GM13976 (cell line): ENCODE measurements at regions of chr9 and their contacts with region 1.

Region 1: GRCh38 chr9:129783516-129784361 is 19.2 kb upstream of the TOR1B start:
- DNase-seq: peak; percentile 88
- CTCF ChIP-seq: peak; percentile 87

Region 2: DNA sequence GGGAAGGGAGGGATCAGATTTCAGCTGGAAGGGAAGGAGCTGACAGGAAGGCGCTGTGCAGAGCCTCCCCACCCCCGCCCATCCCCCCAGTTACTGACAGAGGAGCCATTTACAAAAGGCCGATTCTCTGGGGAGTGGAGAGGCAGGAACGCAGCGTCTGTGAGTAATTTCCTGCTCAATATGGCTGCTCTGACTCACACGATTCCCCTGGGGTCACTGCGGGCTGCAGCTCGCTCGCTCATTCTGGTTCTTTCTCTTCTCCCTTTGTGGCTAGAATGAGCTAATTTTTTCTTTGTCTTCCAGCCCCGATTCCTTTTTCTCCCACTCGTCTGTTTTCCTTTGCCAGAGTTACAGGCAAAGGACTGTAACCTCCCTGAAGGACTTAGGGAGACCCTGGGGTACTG is 643.7 kb before region 1 on chr9:
- in situ Hi-C with region 1: loop called (anchors 25 kb)
- DNase-seq: peak; percentile 93
- CTCF ChIP-seq: no peak

Region 3: DNA sequence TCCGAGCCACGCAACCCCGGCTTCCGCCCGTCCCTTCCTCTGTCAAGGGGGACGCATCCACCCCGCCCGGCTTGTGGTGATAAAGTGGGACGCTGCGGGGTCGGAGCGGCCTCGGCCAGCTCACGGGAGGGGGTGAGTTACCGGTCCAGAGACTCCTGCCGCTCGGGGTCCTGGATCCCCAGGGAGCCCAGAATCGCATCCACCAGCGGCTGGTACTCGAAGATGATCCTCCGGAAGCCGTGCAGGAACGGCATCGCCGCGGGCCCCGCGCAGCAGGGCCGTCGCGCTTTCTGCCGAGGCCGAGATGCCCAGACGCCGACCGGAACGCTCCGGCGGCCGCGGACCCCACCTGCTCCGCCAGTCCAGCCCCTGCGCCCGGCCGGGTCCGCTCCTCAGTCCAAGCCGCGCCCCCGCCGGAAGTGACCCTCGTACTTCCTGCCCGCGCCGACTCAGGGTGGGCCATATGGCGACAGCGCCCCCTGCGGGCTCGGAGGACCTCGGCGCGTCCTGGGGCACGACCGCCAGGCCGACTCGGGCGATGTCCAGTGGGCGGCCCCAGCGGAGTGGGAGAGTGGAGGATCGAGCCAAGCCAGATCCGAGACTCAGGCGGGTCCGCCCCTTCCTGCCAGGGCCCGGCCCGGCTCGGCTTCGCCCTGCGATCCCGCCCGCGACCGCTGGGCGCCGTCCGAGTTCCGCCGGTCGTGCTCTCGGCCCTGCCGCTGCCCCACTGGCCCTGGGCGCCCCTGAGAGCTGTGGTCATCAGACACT is 141.8 kb before region 1 on chr9 and contains the start of gene ASB6:
- in situ Hi-C with region 1: loop called (anchors 10 kb)
- DNase-seq: peak; percentile 100
- CTCF ChIP-seq: peak; percentile 94

Region 4: GRCh38 chr9:129737479-129738274 is 46.1 kb before region 1 on chr9:
- in situ Hi-C with region 1: loop called (anchors 5 kb)
- DNase-seq: peak; percentile 90
- CTCF ChIP-seq: peak; percentile 87